Transverse colon (tissue), 4 donors: ENCODE measurements at regions of chr20 and their contacts with region 1.

Region 1: DNA sequence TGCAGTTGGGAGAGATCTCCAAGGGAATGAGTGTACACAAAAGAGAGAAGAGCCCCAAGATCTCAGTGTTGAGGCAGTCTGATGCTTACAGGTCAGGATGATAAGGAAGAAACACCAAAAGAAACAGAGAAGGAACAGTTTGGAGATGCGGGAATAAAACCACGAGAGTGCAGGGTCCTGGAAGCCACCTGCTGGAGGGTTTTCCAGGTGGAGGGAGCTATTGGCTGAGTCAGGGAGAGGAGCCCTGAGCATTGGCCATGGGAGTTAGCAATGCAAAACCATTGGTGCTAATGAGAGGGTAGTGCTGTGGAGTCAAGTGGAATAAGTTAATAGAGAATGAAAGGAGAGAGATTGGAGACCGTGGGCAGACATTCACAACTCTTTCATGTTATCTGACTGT is 39.2 kb upstream of the RIN2 start:
- DNase-seq: no peak
- H3K4me3 ChIP-seq: no peak overlapping the region
- H3K27ac ChIP-seq: no peak overlapping the region
- H3K4me1 ChIP-seq: peaks cover 0 to 12% (median 4%) of the 10 kb centered on the region in 4 donors
- H3K27me3 ChIP-seq: no peaks in the 10 kb centered on the region
- CTCF ChIP-seq: no peak
- EP300 ChIP-seq: no peak
- POLR2A ChIP-seq: no peak

Region 2: GRCh38 chr20:19740512-19740911 is 21.6 kb after region 1 on chr20:
- in situ Hi-C with region 1: no loop called
- intact Hi-C with region 1: loop called (anchors 1 kb)
- DNase-seq: no peak
- H3K4me3 ChIP-seq: no peak overlapping the region
- H3K27ac ChIP-seq: no peak overlapping the region
- H3K4me1 ChIP-seq: peaks cover 4 to 39% (median 21%) of the 10 kb centered on the region in 4 donors
- H3K27me3 ChIP-seq: no peaks in the 10 kb centered on the region
- CTCF ChIP-seq: no peak
- EP300 ChIP-seq: no peak
- POLR2A ChIP-seq: no peak